Right ventricle myocardium inferior (tissue), 1 donor: ENCODE measurements at regions of chr10 and their contacts with region 1.

Region 1: DNA sequence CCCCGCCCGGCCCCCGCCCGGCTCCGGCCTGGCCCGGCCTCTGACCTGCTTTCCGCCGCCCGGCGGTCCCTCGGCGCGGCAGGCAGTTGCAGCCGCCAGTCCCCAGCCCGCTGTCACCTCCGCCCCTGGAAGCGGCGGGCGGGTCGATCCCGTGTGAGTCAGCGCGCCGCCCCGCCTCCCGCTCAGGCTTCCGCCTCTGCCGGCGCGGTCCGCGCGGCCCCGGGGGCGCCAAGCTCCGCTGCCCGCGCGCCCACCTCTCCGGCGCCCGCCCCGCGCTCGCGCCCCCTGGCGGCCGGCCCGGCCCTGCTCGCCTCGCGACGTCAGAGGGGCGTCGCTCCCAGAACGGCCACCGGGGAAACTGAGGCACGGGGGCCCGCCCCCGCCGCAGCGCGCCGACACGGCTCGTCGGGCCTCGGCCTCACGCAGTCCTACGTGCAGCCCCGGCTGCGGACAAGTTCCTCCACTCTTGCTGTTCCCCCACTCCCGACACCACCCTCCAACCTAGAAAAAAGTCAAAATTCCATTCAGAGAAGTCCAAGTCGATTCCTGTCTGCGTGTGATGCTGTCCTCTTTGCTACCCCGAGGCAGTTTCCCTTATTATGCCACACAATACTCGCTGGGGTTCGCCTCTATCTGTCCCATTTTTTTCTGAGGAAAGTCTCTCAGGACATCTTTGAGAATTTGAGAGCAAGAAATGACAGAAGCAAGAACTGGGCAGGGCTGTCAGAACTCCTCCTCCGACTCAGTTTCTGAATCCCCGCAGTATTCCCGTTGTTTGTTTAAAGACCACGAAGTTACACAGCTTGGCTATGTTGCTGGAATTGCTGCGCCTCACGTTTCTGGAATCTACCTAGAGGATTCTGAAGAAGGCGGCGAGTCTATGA is at the start of gene DNMBP:
- DNase-seq: peak; percentile 94
- ATAC-seq: peak; percentile 94
- total RNA-seq, gene DNMBP: 6.6 TPM

Region 2: DNA sequence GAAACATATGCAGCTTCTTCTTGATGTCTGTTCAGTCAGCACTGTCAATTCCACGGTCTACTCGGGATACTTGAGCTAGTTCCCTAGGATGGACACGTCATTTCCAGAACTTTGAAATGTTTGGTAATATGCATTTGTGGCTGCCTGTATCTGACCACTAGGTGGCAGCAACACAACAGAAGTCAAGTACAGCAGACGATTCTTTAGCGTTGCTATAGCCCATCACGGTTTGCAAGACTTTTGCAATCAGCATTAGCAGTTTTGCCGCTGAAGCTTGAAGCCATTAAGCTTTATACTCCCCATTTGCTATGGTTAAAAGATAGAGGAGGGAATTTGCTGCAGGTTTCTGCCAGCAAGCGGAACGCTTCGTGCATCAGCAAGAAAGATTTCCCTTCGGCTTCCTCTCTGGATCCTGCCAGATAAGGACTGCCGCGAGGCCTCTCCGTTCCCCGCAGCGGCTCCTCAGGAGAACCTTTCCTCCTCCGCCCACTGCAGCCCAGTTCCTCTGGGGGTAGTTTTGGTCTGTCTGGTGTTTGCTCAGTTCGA is 164.1 kb before region 1 on chr10:
- intact Hi-C with region 1: loop called (anchors 1 kb)
- DNase-seq: no peak
- ATAC-seq: peak; percentile 92

Region 3: GRCh38 chr10:99854860-99855259 is 155.2 kb before region 1 on chr10:
- intact Hi-C with region 1: loop called (anchors 2 kb)
- DNase-seq: no peak
- ATAC-seq: no peak

Region 4: DNA sequence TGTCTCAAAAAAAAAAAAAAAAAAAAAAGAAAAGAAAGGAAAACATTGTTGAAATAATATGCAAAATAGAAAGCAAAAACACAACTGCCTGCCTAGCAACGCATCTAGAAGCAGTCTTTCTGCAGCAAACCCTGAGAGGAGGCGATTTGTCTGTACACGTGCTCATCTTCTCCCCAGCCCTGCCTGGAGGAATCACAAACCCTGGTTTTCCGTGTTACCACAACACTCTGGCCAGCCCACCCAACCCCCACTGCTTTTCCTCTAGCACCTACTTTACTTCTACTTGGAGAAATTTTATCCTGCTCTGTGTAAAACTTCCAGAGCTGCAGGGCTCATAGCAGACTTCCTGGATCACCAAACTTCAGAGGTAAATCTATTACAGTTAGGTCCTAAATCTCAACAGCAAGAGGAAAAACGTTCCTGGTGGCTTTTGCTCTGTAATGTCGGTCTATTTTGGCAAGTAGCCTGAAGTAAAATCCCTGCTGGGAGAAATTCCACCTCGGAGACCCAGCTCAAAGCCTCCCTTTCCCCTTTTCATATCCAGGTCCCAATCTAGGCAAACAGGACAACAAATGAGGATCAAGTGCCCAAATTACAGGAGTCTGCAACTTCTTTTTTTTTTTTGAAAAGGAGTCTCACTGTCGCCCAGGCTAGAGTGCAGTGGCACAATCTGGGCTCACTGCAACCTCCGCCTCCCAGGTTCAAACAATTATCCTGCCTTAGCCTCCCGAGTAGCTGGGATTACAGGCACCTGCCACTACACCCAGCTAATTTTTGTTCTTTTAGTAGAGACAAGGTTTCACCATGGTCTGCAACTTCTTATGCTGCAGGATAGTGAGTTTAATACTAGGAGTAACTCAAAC is 91.8 kb before region 1 on chr10:
- intact Hi-C with region 1: loop called (anchors 5 kb)
- DNase-seq: no peak
- ATAC-seq: peak; percentile 37

Region 5: DNA sequence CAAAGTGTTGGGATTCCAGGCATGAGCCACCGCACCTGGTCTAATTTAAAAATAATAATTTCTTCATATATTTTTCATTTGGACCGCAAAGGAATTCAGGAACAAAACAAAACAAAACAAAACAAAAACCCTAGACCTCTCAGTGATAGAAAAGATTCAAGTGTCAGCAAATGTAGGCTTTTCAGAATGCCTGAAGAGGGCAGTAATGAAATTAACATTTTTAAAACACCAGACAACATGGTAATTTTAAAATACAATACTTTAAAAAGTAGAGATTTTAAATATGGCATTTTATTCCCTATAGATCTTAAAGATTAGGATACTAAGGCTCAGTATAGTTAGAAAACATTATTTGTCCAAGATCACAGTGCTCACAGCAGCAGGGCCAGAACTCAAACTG is 36.8 kb before region 1 on chr10:
- intact Hi-C with region 1: loop called (anchors 5 kb)
- DNase-seq: no peak
- ATAC-seq: no peak

Region 6: GRCh38 chr10:100046021-100046486 is 36.0 kb after region 1 on chr10:
- intact Hi-C with region 1: loop called (anchors 1 kb)
- DNase-seq: peak; percentile 92
- ATAC-seq: peak; percentile 64